ENCODE measurements at regions of chr15 and their contacts with region 1.

Region 1: GRCh38 chr15:40274350-40275274 is 8.3 kb downstream of the ANKRD63 start:
- DNase-seq: peak; percentile 88
- ATAC-seq: peak; percentile 35
- H3K4me3 Mint-ChIP-seq: no peak overlapping the region
- H3K27ac Mint-ChIP-seq: peak overlapping the region; percentile 79; the same call in 1 of the 2 replicates
- H3K4me1 Mint-ChIP-seq: peaks cover 25% of the 10 kb centered on the region
- H3K27me3 Mint-ChIP-seq: peaks cover 17% of the 10 kb centered on the region
- CTCF ChIP-seq: peak; percentile 100

Region 2: GRCh38 chr15:39925112-39925842 is 349.3 kb before region 1 on chr15:
- CTCF ChIA-PET with region 1: no interaction called
- POLR2A ChIA-PET with region 1: no interaction called
- DNase-seq: no peak
- ATAC-seq: no peak
- H3K4me3 Mint-ChIP-seq: no peak overlapping the region; the same call in 1 of the 2 replicates
- H3K27ac Mint-ChIP-seq: peak overlapping the region; percentile 78
- H3K4me1 Mint-ChIP-seq: peaks cover 46% of the 10 kb centered on the region
- H3K27me3 Mint-ChIP-seq: no peaks in the 10 kb centered on the region
- CTCF ChIP-seq: no peak

Region 3: GRCh38 chr15:40081691-40082194 is 192.9 kb before region 1 on chr15:
- CTCF ChIA-PET with region 1: interaction called, 11 read pairs
- POLR2A ChIA-PET with region 1: no interaction called
- DNase-seq: peak; percentile 64
- ATAC-seq: peak; percentile 92
- H3K4me3 Mint-ChIP-seq: peak overlapping the region; percentile 41
- H3K27ac Mint-ChIP-seq: peak overlapping the region; percentile 12; the same call in 1 of the 2 replicates
- H3K4me1 Mint-ChIP-seq: peaks cover 36% of the 10 kb centered on the region
- H3K27me3 Mint-ChIP-seq: peaks cover 28% of the 10 kb centered on the region
- CTCF ChIP-seq: no peak

Region 4: GRCh38 chr15:40217159-40217824 is 57.3 kb before region 1 on chr15:
- CTCF ChIA-PET with region 1: interaction called, 273 read pairs
- POLR2A ChIA-PET with region 1: no interaction called
- DNase-seq: no peak
- ATAC-seq: peak; percentile 87
- H3K4me3 Mint-ChIP-seq: no peak overlapping the region
- H3K27ac Mint-ChIP-seq: no peak overlapping the region
- H3K4me1 Mint-ChIP-seq: no peaks in the 10 kb centered on the region
- H3K27me3 Mint-ChIP-seq: no peaks in the 10 kb centered on the region
- CTCF ChIP-seq: peak; percentile 71

Region 5: GRCh38 chr15:40252438-40253166 is 22.0 kb before region 1 on chr15:
- CTCF ChIA-PET with region 1: interaction called, 224 read pairs
- POLR2A ChIA-PET with region 1: no interaction called
- DNase-seq: peak; percentile 68
- ATAC-seq: peak; percentile 70
- H3K4me3 Mint-ChIP-seq: peak overlapping the region; percentile 73
- H3K27ac Mint-ChIP-seq: no peak overlapping the region
- H3K4me1 Mint-ChIP-seq: peaks cover 18% of the 10 kb centered on the region
- H3K27me3 Mint-ChIP-seq: peaks cover 38% of the 10 kb centered on the region
- CTCF ChIP-seq: no peak

Region 6: DNA sequence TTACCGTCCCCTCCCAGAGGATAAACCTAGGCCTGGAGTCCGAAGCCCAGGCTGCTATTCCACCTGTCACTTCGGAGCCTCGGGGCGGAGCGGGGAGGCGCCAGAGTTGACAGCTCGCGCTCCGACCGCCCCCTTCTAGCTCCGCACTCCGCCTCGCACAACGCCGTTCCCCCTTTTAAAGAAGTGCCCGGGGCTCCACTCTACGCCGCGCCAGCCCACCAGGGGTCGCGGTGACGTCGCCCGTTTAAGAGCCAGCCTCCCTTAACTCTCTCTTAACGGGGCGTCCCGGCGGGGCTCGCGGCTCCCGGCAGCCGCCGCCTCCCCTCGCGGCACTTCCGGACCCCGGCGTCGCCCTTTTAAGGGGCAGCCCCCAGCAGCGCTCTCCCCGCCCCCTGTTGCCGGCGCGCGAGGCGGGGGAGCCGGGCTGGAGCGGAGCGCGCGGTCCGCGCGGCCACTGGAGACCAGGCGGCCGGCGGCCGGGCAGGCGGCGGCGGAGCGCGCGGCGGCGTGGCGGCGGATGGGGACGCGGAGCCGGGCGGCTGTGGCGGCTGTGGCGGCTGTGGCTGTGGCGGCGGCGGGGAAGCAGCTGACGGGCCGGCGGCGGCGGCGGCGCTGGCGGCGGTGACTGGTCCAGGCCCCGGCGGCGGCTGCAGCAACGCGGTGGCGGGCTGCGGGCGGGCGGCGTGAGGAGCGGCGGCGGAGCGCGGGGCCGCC is 48.8 kb after region 1 on chr15 and contains the start of gene INAFM2:
- CTCF ChIA-PET with region 1: interaction called, 690 read pairs
- POLR2A ChIA-PET with region 1: interaction called, 7 read pairs
- DNase-seq: peak; percentile 96
- ATAC-seq: peak; percentile 82
- H3K4me3 Mint-ChIP-seq: peak within 1 kb of the TSS; percentile 68
- H3K27ac Mint-ChIP-seq: no peak within 1 kb of the TSS
- H3K4me1 Mint-ChIP-seq: peaks cover 62% of the 10 kb centered on the region
- H3K27me3 Mint-ChIP-seq: peaks cover 25% of the 10 kb centered on the region
- CTCF ChIP-seq: no peak
- total RNA-seq, gene INAFM2: 28.2 to 34.2 TPM (median 30.3 TPM) in 3 replicates

Region 7: DNA sequence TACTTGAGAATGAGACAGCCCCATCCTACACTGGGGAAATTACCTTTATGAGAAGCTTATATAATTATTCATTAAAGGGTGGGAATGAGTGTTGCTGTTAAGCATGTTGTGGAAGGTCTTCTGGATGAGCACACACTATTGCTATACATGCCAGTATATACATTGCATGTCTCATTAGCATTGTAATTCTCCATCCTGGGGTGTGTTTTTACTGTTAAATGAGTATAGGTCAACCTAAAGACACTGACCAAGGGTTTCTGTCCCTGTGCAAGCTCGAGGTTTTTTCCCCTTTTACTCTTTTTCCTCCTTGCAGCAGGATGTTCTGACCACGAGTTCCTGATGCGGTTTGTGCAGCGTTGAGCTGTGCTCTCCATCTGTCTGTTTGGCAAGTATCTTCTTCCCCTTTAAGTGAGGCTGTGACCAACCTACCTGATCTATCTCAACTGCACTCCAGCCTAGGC is 123.8 kb after region 1 on chr15:
- CTCF ChIA-PET with region 1: interaction called, 10 read pairs
- POLR2A ChIA-PET with region 1: no interaction called
- DNase-seq: no peak
- ATAC-seq: no peak
- H3K4me3 Mint-ChIP-seq: no peak overlapping the region
- H3K27ac Mint-ChIP-seq: no peak overlapping the region
- H3K4me1 Mint-ChIP-seq: no peaks in the 10 kb centered on the region
- H3K27me3 Mint-ChIP-seq: no peaks in the 10 kb centered on the region
- CTCF ChIP-seq: no peak